Activated CD4-positive, alpha-beta memory T cell treated with anti-CD3 and anti-CD28 coated beads, Interleukin-2, amount 10 ng/mL, durations not matched to agents 7 days and 5 days (primary cell): ENCODE measurements at regions of chr17 and their contacts with region 1.

Region 1: DNA sequence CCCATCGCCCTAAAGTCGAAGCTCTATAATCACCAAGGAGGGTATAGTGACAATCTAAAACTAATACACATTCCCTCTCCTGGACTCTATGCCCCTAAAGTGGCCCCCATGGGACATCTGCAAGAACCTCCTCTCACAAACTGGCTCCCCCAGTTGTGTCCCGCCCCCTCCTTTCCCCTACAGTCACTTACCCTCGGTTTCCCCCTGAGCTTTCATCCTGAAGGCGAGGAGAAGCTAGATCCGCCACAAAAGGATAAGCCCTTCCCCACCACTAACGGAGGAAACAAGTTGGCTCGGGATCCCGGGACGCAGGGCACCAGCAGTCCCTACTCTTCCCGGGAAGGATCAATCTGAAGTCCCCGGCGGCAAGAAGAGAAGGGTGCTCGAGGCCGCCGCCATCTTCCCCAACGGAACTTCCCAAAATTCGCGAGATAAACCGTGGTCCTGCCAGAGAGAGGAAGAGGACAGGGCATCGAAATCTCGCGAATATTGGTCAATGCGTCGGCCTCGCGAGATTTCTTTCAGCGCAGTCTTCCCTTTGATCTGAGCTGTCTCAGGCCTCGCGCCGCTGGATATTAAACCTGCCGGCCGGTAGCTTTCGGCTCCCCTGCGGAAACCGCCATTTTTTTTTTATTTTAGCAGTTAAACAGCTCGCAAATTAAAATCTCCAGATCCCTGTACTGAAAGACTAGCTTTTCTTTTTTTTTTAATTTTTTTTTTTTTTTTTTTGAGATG is at the start of gene MED1:
- DNase-seq: peak; percentile 95
- H3K4me3 Mint-ChIP-seq: peak within 1 kb of the TSS; percentile 98
- H3K27ac Mint-ChIP-seq: peak within 1 kb of the TSS; percentile 95
- H3K4me1 Mint-ChIP-seq: peaks cover 31% of the 10 kb centered on the region
- H3K27me3 Mint-ChIP-seq: no peaks in the 10 kb centered on the region
- total RNA-seq, gene MED1: 51.0 to 51.9 TPM

Region 2: DNA sequence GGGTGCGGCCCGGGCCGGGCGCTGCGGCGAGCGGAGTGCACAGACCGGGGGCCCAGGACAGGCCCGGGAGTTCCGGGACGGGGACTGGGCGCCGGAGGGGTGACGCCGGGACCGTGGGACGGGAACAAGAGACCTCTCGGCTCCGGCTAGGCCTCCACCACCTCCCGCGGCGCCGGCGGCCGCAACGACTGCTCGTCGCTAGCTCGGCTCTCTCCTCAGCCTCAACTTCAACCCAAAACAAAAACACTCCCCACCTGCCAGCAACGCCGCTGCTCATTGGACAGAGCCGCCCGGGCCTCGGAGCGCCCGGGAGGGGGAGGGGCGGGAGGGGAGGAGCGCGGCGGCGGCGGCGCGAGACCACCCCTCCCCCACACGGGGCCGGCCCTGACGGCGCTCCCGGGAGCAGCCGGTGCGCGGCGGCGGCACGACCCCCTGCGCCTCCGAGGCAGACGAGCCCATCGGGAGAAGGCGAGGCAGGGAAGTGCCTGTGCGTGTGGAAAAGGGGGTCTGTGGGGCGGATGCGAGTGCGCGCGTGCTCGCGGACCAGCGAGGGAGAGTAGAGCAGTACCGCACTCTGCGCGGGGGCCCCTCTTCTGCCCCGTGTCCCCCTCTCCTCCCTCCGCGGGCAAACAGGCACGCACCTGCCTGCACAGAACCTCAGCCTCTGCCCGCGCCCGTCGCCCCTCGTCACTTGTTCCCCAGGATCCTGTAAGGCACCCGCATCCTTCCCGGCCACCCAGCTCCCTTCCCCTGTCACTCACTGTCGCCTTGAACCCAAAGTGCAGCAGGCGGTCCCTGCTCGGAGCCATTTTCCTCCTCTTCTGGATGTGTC is 49.4 kb before region 1 on chr17 and contains the start of gene FBXL20:
- CTCF ChIA-PET with region 1: interaction called, 3 read pairs
- POLR2A ChIA-PET with region 1: interaction called, 11 read pairs
- DNase-seq: peak; percentile 94
- H3K4me3 Mint-ChIP-seq: peak within 1 kb of the TSS; percentile 97
- H3K27ac Mint-ChIP-seq: peak within 1 kb of the TSS; percentile 96
- H3K4me1 Mint-ChIP-seq: peaks cover 46% of the 10 kb centered on the region
- H3K27me3 Mint-ChIP-seq: no peaks in the 10 kb centered on the region
- total RNA-seq, gene FBXL20: 17.5 to 18.4 TPM

Region 3: DNA sequence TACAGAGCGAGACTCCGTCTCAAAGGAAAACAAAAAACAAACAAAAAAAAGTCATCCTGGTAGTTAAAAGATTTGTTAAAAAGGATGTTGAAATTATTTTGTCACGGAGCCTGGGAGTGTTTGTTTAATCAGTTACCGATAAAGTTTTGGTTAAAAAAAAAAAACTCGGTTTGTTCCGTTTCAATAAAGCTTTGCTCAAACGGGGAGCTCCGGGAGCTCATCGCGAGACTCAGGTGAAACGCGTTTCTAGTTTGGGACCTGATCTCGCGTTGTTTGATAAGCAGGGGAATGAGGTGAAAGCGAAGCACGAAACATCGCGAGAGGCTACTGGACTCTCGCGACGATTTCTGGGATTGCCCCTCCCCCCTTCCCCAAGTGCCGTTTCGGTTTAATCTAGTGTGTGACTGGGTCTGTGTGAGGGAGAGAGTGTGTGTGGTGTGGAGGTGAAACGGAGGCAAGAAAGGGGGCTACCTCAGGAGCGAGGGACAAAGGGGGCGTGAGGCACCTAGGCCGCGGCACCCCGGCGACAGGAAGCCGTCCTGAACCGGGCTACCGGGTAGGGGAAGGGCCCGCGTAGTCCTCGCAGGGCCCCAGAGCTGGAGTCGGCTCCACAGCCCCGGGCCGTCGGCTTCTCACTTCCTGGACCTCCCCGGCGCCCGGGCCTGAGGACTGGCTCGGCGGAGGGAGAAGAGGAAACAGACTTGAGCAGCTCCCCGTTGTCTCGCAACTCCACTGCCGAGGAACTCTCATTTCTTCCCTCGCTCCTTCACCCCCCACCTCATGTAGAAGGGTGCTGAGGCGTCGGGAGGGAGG is 10.3 kb after region 1 on chr17 and contains the start of gene CDK12:
- CTCF ChIA-PET with region 1: interaction called, 40 read pairs
- POLR2A ChIA-PET with region 1: interaction called, 251 read pairs
- DNase-seq: peak; percentile 96
- H3K4me3 Mint-ChIP-seq: peak within 1 kb of the TSS; percentile 87
- H3K27ac Mint-ChIP-seq: peak within 1 kb of the TSS; percentile 93
- H3K4me1 Mint-ChIP-seq: peaks cover 27% of the 10 kb centered on the region
- H3K27me3 Mint-ChIP-seq: no peaks in the 10 kb centered on the region
- total RNA-seq, gene CDK12: 68.1 to 70.7 TPM